Activated naive CD4-positive, alpha-beta T cell treated with anti-CD3 and anti-CD28 coated beads, Interleukin-2, amount 10 ng/mL, durations not matched to agents 7 days and 5 days (primary cell): ENCODE measurements at regions of chr15 and their contacts with region 1.

Region 1: GRCh38 chr15:81265944-81266775 is 57.8 kb downstream of the STARD5 start:
- DNase-seq: peak; percentile 91
- H3K4me3 Mint-ChIP-seq: peak overlapping the region; percentile 27
- H3K27ac Mint-ChIP-seq: peak overlapping the region; percentile 47
- H3K4me1 Mint-ChIP-seq: peaks cover 40% of the 10 kb centered on the region
- H3K27me3 Mint-ChIP-seq: peaks cover 24% of the 10 kb centered on the region

Region 2: GRCh38 chr15:80996247-80996646 is 269.9 kb before region 1 on chr15:
- CTCF ChIA-PET with region 1: interaction called, 20 read pairs
- DNase-seq: no peak
- H3K4me3 Mint-ChIP-seq: no peak overlapping the region
- H3K27ac Mint-ChIP-seq: no peak overlapping the region
- H3K4me1 Mint-ChIP-seq: peaks cover 60% of the 10 kb centered on the region
- H3K27me3 Mint-ChIP-seq: no peaks in the 10 kb centered on the region

Region 3: GRCh38 chr15:81146006-81146405 is 120.2 kb before region 1 on chr15:
- CTCF ChIA-PET with region 1: interaction called, 262 read pairs
- DNase-seq: no peak
- H3K4me3 Mint-ChIP-seq: no peak overlapping the region
- H3K27ac Mint-ChIP-seq: no peak overlapping the region
- H3K4me1 Mint-ChIP-seq: no peaks in the 10 kb centered on the region
- H3K27me3 Mint-ChIP-seq: peaks cover 21% of the 10 kb centered on the region

Region 4: GRCh38 chr15:81182756-81183438 is 83.3 kb before region 1 on chr15:
- CTCF ChIA-PET with region 1: interaction called, 10 read pairs
- DNase-seq: no peak
- H3K4me3 Mint-ChIP-seq: no peak overlapping the region
- H3K27ac Mint-ChIP-seq: no peak overlapping the region
- H3K4me1 Mint-ChIP-seq: peaks cover 39% of the 10 kb centered on the region
- H3K27me3 Mint-ChIP-seq: peaks cover 80% of the 10 kb centered on the region

Region 5: DNA sequence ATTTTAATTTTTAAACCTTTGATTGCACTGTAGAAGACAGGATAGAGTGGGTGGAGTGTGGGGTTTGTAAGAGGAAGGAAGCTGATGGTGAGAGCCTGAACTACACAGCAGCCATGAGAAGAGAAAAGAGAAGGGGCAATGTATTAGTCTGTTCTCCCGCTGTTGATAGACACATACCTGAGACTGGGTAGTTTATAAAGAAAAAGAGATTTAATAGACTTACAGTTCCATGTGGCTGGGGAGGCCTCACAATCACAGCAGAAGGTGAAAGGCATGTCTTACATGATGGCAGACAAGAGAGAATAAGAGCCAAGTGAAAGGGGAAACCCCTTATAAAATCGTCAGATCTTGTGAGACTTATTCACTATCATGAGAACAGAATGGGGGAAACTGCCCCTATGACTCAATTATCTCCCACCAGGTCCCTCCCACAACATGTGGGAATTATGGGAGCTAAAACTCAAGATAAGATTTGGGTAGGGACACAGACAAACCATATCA is 20.5 kb after region 1 on chr15:
- CTCF ChIA-PET with region 1: interaction called, 29 read pairs
- DNase-seq: no peak
- H3K4me3 Mint-ChIP-seq: peak overlapping the region; percentile 19
- H3K27ac Mint-ChIP-seq: peak overlapping the region; percentile 89
- H3K4me1 Mint-ChIP-seq: peaks cover 70% of the 10 kb centered on the region
- H3K27me3 Mint-ChIP-seq: no peaks in the 10 kb centered on the region

Region 6: GRCh38 chr15:81410318-81410753 is 144.2 kb after region 1 on chr15:
- CTCF ChIA-PET with region 1: interaction called, 17 read pairs
- DNase-seq: peak; percentile 45
- H3K4me3 Mint-ChIP-seq: no peak overlapping the region
- H3K27ac Mint-ChIP-seq: no peak overlapping the region
- H3K4me1 Mint-ChIP-seq: peaks cover 12% of the 10 kb centered on the region
- H3K27me3 Mint-ChIP-seq: peaks cover 29% of the 10 kb centered on the region

Region 7: DNA sequence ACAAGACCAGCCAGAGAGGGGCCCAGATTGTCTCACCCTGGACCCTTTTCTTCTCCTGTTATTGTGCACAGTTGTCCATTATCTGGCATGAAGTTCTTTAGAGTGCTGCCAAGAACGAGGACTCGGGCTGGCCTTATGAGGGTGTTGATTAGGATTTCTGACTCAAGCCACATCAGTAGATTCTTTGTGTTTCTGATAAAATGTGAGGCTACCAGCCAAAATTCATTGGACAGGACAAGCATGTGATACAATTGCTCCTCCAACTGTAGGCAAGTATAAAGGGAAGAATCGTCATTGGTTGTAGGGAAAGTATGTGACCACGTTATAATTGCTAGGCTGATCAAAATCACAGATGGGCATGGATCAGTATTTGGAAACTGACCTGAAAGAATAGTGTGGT is 207.0 kb after region 1 on chr15:
- CTCF ChIA-PET with region 1: no interaction called
- DNase-seq: no peak
- H3K4me3 Mint-ChIP-seq: no peak overlapping the region
- H3K27ac Mint-ChIP-seq: no peak overlapping the region
- H3K4me1 Mint-ChIP-seq: no peaks in the 10 kb centered on the region
- H3K27me3 Mint-ChIP-seq: peaks cover 14% of the 10 kb centered on the region